Lower leg skin (tissue), 4 donors: ENCODE measurements at regions of chr14 and their contacts with region 1.

Region 1: DNA sequence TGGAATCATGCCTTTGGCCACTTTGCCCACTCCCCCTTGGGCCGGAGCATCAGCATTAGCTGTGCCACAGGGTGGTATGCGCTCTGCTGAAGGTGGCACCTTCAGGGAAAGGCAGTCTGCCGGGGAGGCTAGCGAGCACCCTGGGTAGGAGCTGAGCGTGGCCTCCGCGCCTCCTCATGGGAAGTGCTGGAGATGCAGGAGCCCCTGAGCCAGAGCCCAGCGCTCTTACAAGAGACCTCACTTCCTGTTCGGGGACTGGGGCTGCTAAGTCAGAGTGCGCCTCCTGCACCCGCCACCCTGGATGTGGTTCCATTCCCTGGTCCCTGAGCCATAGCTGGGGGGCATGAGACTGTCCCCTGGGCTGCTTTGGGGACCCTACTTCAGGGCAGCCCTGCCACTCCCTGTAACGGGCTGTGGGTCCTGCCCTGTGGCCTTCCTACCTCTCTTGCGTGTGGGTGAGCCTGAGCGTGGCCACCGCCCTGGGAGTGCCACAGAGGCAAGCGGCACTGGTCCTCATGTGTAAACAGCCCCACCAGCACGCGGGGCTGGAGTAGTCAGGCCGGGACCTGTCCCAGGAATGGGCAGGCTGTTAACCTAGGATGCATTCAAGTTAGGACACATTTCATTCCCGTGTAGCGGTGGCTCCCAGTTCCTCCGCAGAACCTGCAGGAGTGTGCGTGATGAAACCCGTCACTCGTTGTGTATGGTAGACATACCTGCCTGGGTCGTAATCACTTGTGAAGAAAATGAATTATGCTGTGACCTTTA is 19.4 kb downstream of the COA8 start:
- DNase-seq: peak; percentile 63 to 88
- H3K4me3 ChIP-seq: no peak overlapping the region
- CTCF ChIP-seq: no peak
- POLR2A ChIP-seq: no peak

Region 2: GRCh38 chr14:102292441-102292840 is 1289.7 kb before region 1 on chr14:
- intact Hi-C with region 1: loop called (anchors 5 kb)
- DNase-seq: no peak
- H3K4me3 ChIP-seq: no peak overlapping the region
- CTCF ChIP-seq: no peak
- POLR2A ChIP-seq: no peak

Region 3: GRCh38 chr14:102966681-102967505 is 615.2 kb before region 1 on chr14:
- intact Hi-C with region 1: no loop called
- DNase-seq: no peak
- H3K4me3 ChIP-seq: no peak overlapping the region
- CTCF ChIP-seq: no peak
- POLR2A ChIP-seq: no peak